Right ventricle myocardium superior (tissue), 1 donor: ENCODE measurements at regions of chr7 and their contacts with region 1.

Region 1: DNA sequence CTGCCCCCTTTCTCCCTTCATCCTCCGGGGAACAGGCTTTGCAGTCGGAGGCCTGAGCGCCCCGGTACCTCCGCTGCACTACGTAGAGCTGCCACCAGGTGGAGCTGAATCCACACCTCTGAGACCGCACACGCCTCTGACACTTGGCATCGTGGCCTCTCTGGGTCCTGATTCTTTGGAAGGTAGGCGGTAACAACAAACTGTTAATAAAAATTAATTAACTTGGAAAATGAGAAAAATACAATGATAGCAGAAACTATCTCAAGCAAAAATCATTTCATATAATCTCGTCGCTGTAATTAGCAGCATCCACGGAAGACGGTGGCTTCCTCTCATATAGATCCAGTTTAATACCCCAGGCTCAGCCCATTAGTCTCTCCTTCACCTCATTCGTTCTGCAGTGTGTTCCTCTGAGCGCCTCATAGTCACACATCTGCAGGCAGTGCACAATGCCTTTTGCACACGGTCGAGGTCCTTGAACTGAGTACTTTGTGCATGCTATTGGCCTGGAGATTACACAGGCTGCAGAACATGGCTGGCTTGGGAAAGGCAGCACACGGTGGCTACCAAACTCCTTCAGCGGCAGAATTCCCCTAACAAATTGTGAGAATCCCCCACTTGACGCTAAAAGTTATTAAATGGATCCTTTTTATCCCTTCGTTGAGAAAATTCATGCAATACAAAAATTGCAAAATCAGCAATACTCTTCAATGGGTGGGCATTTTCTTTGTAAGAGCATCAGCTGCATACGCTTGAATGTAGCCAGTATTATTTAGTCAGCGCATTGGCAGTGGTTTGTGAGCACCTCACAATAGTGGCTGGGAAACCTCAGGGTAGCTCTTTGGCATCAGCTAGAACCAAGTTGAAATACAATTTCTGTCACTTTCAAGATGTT is 18.7 kb downstream of the OR9A2 start:
- DNase-seq: peak; percentile 88
- ATAC-seq: peak; percentile 95

Region 2: GRCh38 chr7:142853739-142854371 is 154.4 kb before region 1 on chr7:
- intact Hi-C with region 1: loop called (anchors 10 kb)
- DNase-seq: peak; percentile 78
- ATAC-seq: peak; percentile 83

Region 3: DNA sequence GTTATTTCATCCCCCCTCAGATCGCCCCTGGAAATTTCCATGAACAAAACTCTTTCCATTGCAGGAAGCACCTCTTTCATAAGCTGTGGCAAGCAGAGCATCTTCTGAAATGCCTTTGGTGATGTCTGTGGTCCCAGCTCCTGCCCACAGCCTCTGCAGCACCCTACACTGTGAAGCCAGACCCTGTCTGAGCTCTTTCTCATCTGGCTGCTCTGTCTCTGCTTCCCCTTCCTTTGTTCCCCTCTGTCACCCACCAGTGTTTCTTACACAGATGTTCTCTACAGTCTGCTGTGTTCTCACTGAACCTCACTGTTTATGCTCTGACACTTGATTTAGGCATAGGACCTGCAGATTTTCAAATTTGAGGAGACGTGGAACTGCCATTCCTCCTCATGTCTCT is 173.1 kb after region 1 on chr7:
- intact Hi-C with region 1: no loop called
- DNase-seq: no peak
- ATAC-seq: no peak

Region 4: GRCh38 chr7:143214789-143215679 is 206.8 kb after region 1 on chr7:
- intact Hi-C with region 1: loop called (anchors 5 kb)
- DNase-seq: no peak
- ATAC-seq: peak; percentile 87

Region 5: DNA sequence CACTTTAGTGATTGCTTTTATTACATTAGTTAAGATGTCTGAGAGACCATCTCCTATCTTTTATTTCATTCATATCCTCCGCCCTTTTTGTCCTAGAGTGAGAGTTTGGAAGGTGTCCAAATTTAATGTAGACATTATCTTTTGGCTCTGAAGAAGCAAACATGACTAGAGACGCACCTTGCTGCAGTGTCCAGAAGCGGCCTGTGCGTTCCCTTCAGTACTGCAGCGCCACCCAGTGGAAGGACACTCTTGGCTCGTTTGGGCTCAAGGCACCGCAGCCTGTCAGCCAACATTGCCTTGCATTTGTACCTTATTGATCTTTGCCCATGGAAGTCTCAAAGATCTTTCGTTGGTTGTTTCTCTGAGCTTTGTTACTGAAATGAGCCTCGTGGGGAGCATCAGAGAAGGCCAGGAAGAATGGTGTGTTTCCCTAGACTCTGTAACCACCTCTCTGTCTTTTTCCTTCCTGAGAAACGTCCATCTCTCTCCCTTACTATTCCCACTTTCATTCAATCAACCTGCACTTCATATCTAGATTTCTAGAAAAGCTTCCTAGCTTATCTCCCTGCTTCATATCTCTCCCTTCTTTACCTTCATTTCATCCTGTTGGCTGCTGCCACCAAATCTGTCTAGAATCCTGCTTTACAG is 297.3 kb after region 1 on chr7:
- intact Hi-C with region 1: loop called (anchors 5 kb)
- DNase-seq: peak; percentile 85
- ATAC-seq: peak; percentile 92